ENCODE measurements at regions of chr17 and their contacts with region 1.

Region 1: GRCh38 chr17:9115446-9116191 is 94.3 kb downstream of the NTN1 start:
- DNase-seq: peak in 10 of 14 experiments; percentile 10 to 48 (median 26)
- ATAC-seq: peak; percentile 76
- H3K4me3 ChIP-seq: peak overlapping the region; percentile 35
- H3K4me3 Mint-ChIP-seq: peak overlapping the region; percentile 85
- H3K27ac ChIP-seq: no peak overlapping the region
- H3K27ac Mint-ChIP-seq: no peak overlapping the region
- H3K4me1 ChIP-seq: peaks cover 7% of the 10 kb centered on the region
- H3K4me1 Mint-ChIP-seq: no peaks in the 10 kb centered on the region
- H3K27me3 ChIP-seq: peaks cover 0 to 12% of the 10 kb centered on the region in 2 experiments
- H3K27me3 Mint-ChIP-seq: peaks cover 2% of the 10 kb centered on the region
- CTCF ChIP-seq: peak; percentile 13

Region 2: GRCh38 chr17:9138101-9138717 is 22.6 kb after region 1 on chr17:
- CTCF ChIA-PET with region 1: no interaction called
- POLR2A ChIA-PET with region 1: no interaction called
- intact Hi-C with region 1: no loop called
- DNase-seq: no peak
- ATAC-seq: no peak
- H3K4me3 ChIP-seq: no peak overlapping the region
- H3K4me3 Mint-ChIP-seq: no peak overlapping the region
- H3K27ac ChIP-seq: no peak overlapping the region
- H3K27ac Mint-ChIP-seq: no peak overlapping the region
- H3K4me1 ChIP-seq: no peaks in the 10 kb centered on the region
- H3K4me1 Mint-ChIP-seq: no peaks in the 10 kb centered on the region
- H3K27me3 ChIP-seq: no peaks in the 10 kb centered on the region
- H3K27me3 Mint-ChIP-seq: no peaks in the 10 kb centered on the region
- CTCF ChIP-seq: no peak

Region 3: GRCh38 chr17:9291912-9292560 is 176.4 kb after region 1 on chr17:
- CTCF ChIA-PET with region 1: no interaction called
- POLR2A ChIA-PET with region 1: no interaction called
- intact Hi-C with region 1: loop called (anchors 5 kb)
- DNase-seq: peak in 12 of 14 experiments; percentile 2 to 55 (median 19)
- ATAC-seq: peak; percentile 83
- H3K4me3 ChIP-seq: no peak overlapping the region
- H3K4me3 Mint-ChIP-seq: no peak overlapping the region
- H3K27ac ChIP-seq: no peak overlapping the region
- H3K27ac Mint-ChIP-seq: no peak overlapping the region
- H3K4me1 ChIP-seq: peaks cover 5% of the 10 kb centered on the region
- H3K4me1 Mint-ChIP-seq: peaks cover 36% of the 10 kb centered on the region
- H3K27me3 ChIP-seq: no peaks in the 10 kb centered on the region
- H3K27me3 Mint-ChIP-seq: no peaks in the 10 kb centered on the region
- CTCF ChIP-seq: peak; percentile 73

Region 4: DNA sequence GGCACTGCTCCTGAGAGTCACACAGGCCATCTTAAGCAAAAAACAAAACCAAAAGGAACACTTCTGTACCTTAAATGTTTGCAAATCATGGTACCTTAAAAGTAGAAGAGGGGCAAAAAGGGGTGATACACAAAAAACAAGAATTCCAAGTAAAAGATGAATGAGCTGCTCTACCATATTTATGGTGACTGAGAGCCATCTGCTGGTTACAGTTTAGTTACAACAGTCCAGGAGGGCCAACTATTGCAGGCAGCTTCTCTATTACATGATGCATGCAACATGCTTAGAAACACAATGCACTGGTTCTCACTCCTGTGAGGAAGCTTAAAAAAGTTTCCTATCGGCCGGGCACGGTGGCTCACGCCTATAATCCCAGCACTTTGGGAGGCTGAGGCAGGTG is 406.5 kb after region 1 on chr17:
- CTCF ChIA-PET with region 1: no interaction called
- POLR2A ChIA-PET with region 1: no interaction called
- intact Hi-C with region 1: loop called (anchors 10 kb)
- DNase-seq: peak in 3 of 14 experiments; percentile 33 to 40 (median 36)
- ATAC-seq: no peak
- H3K4me3 ChIP-seq: no peak overlapping the region
- H3K4me3 Mint-ChIP-seq: no peak overlapping the region
- H3K27ac ChIP-seq: no peak overlapping the region
- H3K27ac Mint-ChIP-seq: no peak overlapping the region
- H3K4me1 ChIP-seq: peaks cover 10% of the 10 kb centered on the region
- H3K4me1 Mint-ChIP-seq: peaks cover 26% of the 10 kb centered on the region
- H3K27me3 ChIP-seq: no peaks in the 10 kb centered on the region
- H3K27me3 Mint-ChIP-seq: no peaks in the 10 kb centered on the region
- CTCF ChIP-seq: peak; percentile 27

Measured in CD4-positive, alpha-beta T cell (primary cell).